Activated B cell treated with CpG ODN at 0.5 μM for 24 hours (primary cell): ENCODE measurements at regions of chr16 and their contacts with region 1.

Region 1: DNA sequence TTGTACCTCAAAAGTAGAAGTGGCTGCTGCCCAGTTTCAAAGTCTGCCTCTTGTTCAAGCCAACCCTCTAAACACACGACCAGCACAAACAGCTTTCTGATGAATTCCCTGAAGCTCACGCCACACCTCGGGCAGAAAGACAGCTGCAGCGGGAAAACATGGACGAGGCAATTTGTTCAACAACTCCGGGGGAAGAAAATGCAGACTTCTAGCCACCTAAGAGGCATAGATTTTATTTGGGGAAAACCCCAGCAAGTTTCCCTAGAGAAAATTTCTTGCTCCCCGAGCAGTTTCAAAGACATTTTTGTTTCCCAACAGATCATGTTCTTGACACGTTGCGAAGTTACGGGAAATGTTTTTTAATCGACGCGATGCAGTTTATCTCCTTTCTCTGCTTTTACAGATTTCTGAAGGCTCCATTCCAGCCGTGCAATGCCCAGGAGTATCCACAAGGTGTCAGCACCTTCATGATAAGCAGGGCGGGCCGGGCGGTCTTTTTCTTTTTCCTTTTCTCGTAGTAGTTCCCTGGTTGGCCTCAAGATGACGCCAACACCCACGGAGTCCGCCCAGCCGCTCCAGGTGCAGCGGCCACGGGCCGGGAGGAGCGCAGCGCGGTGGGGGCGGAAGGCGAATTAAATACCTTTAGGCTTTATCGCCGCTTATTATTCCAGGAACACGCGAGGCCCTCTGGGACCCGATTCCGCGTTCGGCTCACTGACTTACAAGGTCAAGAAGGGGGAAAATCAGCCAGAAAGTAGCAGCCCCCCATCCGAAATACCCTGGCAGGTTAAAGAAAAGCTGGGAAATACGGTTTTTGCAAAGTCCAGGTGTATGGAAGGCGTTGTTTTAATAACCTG is 2.9 kb upstream of the FOXC2 start:
- DNase-seq: peak; percentile 72
- ATAC-seq: peak; percentile 99
- H3K4me3 Mint-ChIP-seq: peak overlapping the region; percentile 64
- H3K27ac Mint-ChIP-seq: no peak overlapping the region
- H3K4me1 Mint-ChIP-seq: peaks cover 25% of the 10 kb centered on the region
- H3K27me3 Mint-ChIP-seq: peaks cover 32% of the 10 kb centered on the region
- CTCF ChIP-seq: peak; percentile 95

Region 2: DNA sequence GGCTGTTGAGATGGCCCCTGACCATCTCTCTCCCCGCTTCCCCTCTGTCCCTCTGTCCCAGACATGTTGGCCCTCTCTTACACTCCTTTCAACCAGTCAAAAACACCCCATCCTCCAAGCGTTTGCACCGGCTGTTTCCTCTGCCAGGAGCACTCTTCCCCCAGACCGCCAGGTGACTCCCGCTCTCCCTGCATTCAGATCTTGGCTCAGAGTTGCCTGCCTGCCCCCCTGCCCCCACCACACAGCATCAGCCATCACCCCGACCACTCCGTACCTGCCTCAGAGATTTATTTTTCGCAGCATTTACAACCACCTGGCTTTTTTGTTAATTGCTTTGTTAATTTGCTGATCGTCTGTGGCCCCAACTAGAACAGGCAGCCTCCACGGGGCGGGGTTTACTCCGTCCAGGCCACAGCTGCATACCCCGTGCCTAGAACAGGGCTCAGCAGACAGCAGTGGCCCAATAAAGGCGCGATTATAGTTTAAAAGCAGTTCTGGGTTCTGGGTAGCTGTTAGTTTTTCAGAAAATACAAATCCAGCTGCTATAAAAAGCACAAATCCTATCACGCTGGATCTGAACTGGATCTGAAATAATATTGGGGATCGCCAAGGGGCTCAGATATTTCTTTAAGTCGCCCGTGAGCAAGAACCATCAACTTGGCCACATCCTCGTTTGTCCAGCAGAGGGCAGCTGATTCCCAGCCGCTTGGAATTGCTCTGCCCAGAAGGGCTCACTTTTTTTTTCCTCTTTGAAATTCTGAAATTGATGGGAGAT is 491.2 kb before region 1 on chr16:
- CTCF ChIA-PET with region 1: no interaction called
- POLR2A ChIA-PET with region 1: no interaction called
- intact Hi-C with region 1: no loop called
- DNase-seq: no peak
- ATAC-seq: no peak
- H3K4me3 Mint-ChIP-seq: no peak overlapping the region
- H3K27ac Mint-ChIP-seq: no peak overlapping the region
- H3K4me1 Mint-ChIP-seq: no peaks in the 10 kb centered on the region
- H3K27me3 Mint-ChIP-seq: peaks cover 30% of the 10 kb centered on the region
- CTCF ChIP-seq: no peak

Region 3: GRCh38 chr16:86761111-86762031 is 197.7 kb after region 1 on chr16:
- CTCF ChIA-PET with region 1: no interaction called
- POLR2A ChIA-PET with region 1: no interaction called
- intact Hi-C with region 1: loop called (anchors 10 kb)
- DNase-seq: peak; percentile 32
- ATAC-seq: no peak
- H3K4me3 Mint-ChIP-seq: no peak overlapping the region
- H3K27ac Mint-ChIP-seq: no peak overlapping the region
- H3K4me1 Mint-ChIP-seq: no peaks in the 10 kb centered on the region
- H3K27me3 Mint-ChIP-seq: peaks cover 34% of the 10 kb centered on the region
- CTCF ChIP-seq: no peak

Region 4: GRCh38 chr16:87062569-87063442 is 499.1 kb after region 1 on chr16:
- CTCF ChIA-PET with region 1: interaction called, 6 read pairs
- POLR2A ChIA-PET with region 1: no interaction called
- intact Hi-C with region 1: loop called (anchors 2 kb)
- DNase-seq: no peak
- ATAC-seq: peak; percentile 37
- H3K4me3 Mint-ChIP-seq: no peak overlapping the region
- H3K27ac Mint-ChIP-seq: no peak overlapping the region
- H3K4me1 Mint-ChIP-seq: peaks cover 28% of the 10 kb centered on the region
- H3K27me3 Mint-ChIP-seq: peaks cover 18% of the 10 kb centered on the region
- CTCF ChIP-seq: no peak

Region 5: DNA sequence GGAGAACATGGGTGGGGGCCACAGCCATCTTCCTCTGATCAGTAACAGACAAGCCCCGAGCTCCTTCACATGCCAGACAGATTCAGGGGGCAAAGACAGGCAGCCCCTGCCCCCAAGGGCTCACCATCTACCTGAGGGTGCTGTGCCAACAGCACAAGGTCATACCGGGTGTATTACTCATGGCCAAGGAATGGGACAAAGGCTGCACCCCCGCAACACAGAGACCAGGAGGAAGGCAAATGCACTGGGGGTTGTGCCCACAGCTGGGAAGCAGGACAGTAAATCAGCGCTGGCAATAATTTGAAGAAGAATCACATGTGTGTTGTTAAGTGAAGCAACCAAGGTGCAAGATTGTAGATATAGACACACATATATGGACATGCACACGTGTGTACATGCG is 616.4 kb after region 1 on chr16:
- CTCF ChIA-PET with region 1: no interaction called
- POLR2A ChIA-PET with region 1: no interaction called
- intact Hi-C with region 1: loop called (anchors 5 kb)
- DNase-seq: no peak
- ATAC-seq: no peak
- H3K4me3 Mint-ChIP-seq: no peak overlapping the region
- H3K27ac Mint-ChIP-seq: no peak overlapping the region
- H3K4me1 Mint-ChIP-seq: no peaks in the 10 kb centered on the region
- H3K27me3 Mint-ChIP-seq: peaks cover 22% of the 10 kb centered on the region
- CTCF ChIP-seq: no peak

Region 6: DNA sequence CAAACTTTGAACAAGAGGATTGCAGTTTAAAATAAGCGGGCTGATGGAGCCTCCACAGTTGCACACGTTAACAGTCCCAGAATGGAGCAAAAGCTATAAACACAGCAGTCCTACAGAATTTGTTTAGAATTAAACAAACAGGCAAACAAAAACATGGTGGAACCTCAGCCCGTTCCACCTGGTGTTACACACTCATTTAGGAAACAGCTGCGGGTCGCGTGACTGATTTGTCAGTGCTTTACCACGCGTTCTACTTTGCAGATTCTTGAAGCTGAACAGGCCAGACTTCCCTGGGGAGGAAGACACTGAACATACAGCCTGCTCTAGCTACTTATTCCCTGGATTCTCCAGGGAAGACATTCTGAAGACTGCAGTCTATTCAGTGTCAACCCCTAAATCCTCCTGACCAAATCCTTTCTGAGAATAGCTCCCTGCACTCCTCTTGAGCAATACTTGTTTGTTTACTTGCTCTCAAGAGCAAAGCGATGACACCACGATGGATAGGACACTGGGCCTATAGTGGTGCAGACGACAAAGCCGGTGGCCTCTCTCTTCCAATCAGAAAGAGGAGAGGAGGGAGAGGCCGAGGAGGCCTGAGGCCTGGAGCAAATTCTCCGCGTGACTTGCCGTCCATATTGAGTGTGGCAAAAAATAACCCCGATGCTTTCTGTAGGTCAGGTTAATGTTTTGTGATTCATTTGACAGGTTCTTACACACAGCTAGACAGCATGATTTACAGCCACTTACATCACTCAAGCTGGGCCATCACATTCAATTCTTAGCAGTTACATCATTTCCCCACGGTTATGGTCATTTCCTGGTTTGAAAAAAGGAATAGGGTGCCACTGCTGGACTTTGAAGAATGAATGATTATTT is 824.5 kb after region 1 on chr16:
- CTCF ChIA-PET with region 1: no interaction called
- POLR2A ChIA-PET with region 1: no interaction called
- intact Hi-C with region 1: loop called (anchors 5 kb)
- DNase-seq: peak; percentile 59
- ATAC-seq: peak; percentile 62
- H3K4me3 Mint-ChIP-seq: peak overlapping the region; percentile 70
- H3K27ac Mint-ChIP-seq: peak overlapping the region; percentile 98
- H3K4me1 Mint-ChIP-seq: peaks cover 52% of the 10 kb centered on the region
- H3K27me3 Mint-ChIP-seq: peaks cover 2% of the 10 kb centered on the region
- CTCF ChIP-seq: no peak

Region 7: DNA sequence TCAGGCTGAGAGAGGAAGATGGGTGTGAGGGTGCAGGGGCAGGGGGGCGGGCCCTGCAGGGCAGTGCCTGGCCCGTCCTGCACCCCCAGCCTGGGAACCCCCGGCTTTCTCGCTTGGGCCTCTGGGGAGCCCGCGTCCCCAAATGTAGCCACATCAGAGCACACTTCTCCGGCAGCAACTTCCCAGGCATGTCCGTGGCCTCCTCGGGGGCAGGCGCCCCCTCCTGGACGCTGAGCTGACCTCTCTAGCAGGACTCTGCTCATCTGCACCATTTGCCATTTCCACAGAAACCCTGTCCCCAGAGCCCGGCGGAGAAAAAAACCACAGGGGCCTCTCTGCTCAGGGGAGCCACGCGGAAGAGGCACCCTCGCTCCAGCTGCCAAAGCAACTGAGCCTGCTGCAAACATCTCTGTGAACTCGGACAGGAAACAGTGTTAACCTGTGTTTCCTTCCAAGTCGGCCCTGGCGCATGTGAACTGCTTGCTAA is 1138.7 kb after region 1 on chr16:
- CTCF ChIA-PET with region 1: interaction called, 4 read pairs
- POLR2A ChIA-PET with region 1: no interaction called
- intact Hi-C with region 1: loop called (anchors 5 kb)
- DNase-seq: peak; percentile 57
- ATAC-seq: peak; percentile 46
- H3K4me3 Mint-ChIP-seq: peak overlapping the region; percentile 57
- H3K27ac Mint-ChIP-seq: peak overlapping the region; percentile 82
- H3K4me1 Mint-ChIP-seq: peaks cover 58% of the 10 kb centered on the region
- H3K27me3 Mint-ChIP-seq: no peaks in the 10 kb centered on the region
- CTCF ChIP-seq: no peak